Caco-2 (cell line): ENCODE measurements at regions of chr9 and their contacts with region 1.

Region 1: DNA sequence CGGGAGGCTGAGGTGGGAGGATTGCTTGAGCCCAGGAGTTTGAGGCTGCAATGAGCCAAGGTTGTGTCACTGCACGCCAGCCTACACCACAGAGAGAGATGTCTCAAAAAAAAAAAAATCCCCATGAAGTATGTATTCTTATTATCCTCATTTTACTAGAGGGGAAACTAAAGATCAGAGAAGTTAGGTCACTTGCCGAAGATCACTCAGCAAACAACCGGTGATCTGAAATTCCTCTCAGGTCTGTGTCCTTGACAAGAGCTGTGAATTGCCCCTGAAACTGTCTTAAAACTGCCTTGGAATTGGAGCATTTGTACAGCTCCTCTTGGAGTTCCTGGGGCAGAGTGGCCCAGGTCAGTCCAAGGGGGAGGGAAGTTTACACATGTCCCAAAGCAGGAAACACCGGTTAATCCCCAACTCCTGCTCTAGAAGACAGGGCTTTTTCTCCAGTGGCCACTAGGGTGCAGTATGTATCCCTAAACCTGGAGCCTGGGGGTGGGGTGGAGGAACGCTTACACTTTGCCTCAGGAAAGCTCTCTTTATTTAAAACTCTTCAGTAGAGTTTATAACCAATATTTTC is 27.6 kb downstream of the AQP7 start:
- DNase-seq: peak; percentile 82 to 84
- H3K4me3 ChIP-seq: no peak overlapping the region
- H3K4me3 Mint-ChIP-seq: no peak overlapping the region
- H3K27ac Mint-ChIP-seq: no peak overlapping the region
- H3K4me1 ChIP-seq: peaks cover 27% of the 10 kb centered on the region
- H3K4me1 Mint-ChIP-seq: peaks cover 22% of the 10 kb centered on the region
- H3K27me3 ChIP-seq: no peaks in the 10 kb centered on the region
- H3K27me3 Mint-ChIP-seq: no peaks in the 10 kb centered on the region
- CTCF ChIP-seq: peak; percentile 75 to 91

Region 2: GRCh38 chr9:33225319-33226149 is 149.2 kb before region 1 on chr9:
- CTCF ChIA-PET with region 1: no interaction called
- POLR2A ChIA-PET with region 1: no interaction called
- intact Hi-C with region 1: loop called (anchors 1 kb)
- DNase-seq: peak; percentile 56 to 69
- H3K4me3 ChIP-seq: no peak overlapping the region
- H3K4me3 Mint-ChIP-seq: no peak overlapping the region
- H3K27ac Mint-ChIP-seq: no peak overlapping the region
- H3K4me1 ChIP-seq: peaks cover 14% of the 10 kb centered on the region
- H3K4me1 Mint-ChIP-seq: peaks cover 27% of the 10 kb centered on the region
- H3K27me3 ChIP-seq: no peaks in the 10 kb centered on the region
- H3K27me3 Mint-ChIP-seq: no peaks in the 10 kb centered on the region
- CTCF ChIP-seq: peak; percentile 62 to 73

Region 3: DNA sequence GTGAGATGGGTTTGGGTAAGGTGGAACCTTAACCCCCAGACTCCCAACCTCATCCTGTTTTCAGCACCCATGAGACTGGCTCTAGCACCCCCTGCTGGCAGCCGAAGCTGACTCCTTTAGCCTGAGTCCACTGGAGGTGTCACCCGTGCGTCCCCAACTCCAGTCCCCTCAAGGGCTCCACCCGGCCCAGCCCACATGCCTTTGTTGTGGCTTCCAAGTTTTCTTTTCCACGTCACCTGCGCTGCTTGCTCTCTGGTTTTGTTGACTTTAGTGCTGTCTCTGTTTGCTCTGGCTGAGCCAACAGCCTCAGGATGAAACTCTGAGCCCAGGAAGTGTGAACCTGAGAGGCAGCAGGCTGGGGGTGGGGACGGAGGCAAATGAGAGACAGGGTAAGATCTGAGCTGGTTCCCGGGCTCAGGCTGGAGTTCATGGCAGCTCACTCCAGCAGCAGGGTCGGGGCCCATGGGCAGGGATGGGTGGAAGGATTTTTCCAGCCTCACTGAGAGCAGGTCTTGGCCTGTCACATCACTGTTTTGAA is 40.8 kb after region 1 on chr9:
- CTCF ChIA-PET with region 1: interaction called, 20 read pairs
- POLR2A ChIA-PET with region 1: no interaction called
- intact Hi-C with region 1: loop called (anchors 2 kb)
- DNase-seq: peak; percentile 96 to 98
- H3K4me3 ChIP-seq: no peak overlapping the region
- H3K4me3 Mint-ChIP-seq: peak overlapping the region; percentile 45
- H3K27ac Mint-ChIP-seq: peak overlapping the region; percentile 89
- H3K4me1 ChIP-seq: peaks cover 44% of the 10 kb centered on the region
- H3K4me1 Mint-ChIP-seq: peaks cover 51% of the 10 kb centered on the region
- H3K27me3 ChIP-seq: no peaks in the 10 kb centered on the region
- H3K27me3 Mint-ChIP-seq: no peaks in the 10 kb centered on the region
- CTCF ChIP-seq: peak; percentile 75 to 91

Region 4: DNA sequence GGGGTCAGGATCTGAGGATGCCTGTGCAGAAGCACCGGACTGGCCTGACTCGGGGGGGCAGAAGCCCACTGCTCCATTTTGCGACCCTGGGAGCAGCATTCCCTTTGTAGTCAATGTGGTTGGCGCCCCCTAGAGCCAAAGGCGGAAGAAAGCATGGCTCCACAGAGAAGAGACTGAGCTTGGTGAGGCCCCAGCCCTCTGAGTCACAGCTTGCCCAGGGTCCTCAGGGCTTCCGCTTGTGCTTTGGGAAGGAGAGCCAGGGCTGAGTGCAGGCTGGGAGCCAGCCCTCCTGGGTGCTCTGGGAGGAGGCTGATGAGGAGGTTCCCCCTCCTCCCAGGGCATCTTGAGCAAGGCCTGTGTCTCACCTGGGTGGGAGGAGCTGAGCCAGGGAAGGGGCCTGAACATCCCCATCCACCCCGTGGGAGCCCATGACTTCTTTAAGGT is 78.1 kb after region 1 on chr9:
- CTCF ChIA-PET with region 1: interaction called, 30 read pairs
- POLR2A ChIA-PET with region 1: no interaction called
- intact Hi-C with region 1: loop called (anchors 5 kb)
- DNase-seq: peak; percentile 71 to 73
- H3K4me3 ChIP-seq: no peak overlapping the region
- H3K4me3 Mint-ChIP-seq: no peak overlapping the region
- H3K27ac Mint-ChIP-seq: no peak overlapping the region
- H3K4me1 ChIP-seq: peaks cover 24% of the 10 kb centered on the region
- H3K4me1 Mint-ChIP-seq: peaks cover 8% of the 10 kb centered on the region
- H3K27me3 ChIP-seq: no peaks in the 10 kb centered on the region
- H3K27me3 Mint-ChIP-seq: no peaks in the 10 kb centered on the region
- CTCF ChIP-seq: peak; percentile 62 to 70

Region 5: DNA sequence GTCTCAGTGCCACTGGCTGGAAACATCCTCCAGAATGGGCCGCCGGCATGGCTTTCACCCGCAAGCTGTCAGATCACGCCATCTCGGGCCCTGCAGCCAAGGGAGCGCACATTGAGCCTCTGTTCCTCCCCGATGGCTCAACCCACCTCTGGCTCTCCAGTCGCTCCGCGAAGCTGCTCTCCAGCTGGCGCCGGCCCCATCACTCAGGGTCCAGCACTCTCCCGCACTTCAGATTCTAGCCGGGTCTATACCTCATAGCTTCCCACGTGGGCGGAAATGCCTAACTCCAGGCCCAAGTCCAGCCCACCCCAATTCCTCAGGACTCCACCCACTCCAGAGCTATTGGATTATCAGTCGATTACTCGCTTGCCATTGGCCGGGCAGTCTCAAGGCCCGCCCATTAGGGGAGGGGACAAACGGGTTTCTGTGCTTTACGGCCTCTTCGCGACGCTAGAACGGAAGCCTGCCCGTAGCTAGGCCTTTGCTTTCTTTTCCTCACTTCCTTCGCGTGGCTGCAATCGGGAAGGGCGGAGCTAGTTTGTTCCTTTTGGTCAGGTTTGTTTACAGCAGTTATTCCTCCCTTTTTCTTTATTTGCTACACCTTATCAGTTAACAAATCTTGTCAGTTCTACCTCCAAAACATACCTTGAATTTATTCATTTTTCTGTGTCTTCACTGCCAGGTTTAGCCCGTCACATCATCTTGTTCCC is 99.1 kb after region 1 on chr9 and contains the start of gene NOL6:
- CTCF ChIA-PET with region 1: interaction called, 12 read pairs
- POLR2A ChIA-PET with region 1: interaction called, 7 read pairs
- intact Hi-C with region 1: no loop called
- DNase-seq: peak; percentile 98 to 99
- H3K4me3 ChIP-seq: peak within 1 kb of the TSS; percentile 100
- H3K4me3 Mint-ChIP-seq: peak within 1 kb of the TSS; percentile 91
- H3K27ac Mint-ChIP-seq: peak within 1 kb of the TSS; percentile 88
- H3K4me1 ChIP-seq: peaks cover 8% of the 10 kb centered on the region; the same call in 1 of the 2 replicates
- H3K4me1 Mint-ChIP-seq: peaks cover 10% of the 10 kb centered on the region
- H3K27me3 ChIP-seq: no peaks in the 10 kb centered on the region
- H3K27me3 Mint-ChIP-seq: no peaks in the 10 kb centered on the region
- CTCF ChIP-seq: no peak
- total RNA-seq, gene NOL6: 47.2 and 52.1 TPM in 2 replicates